Transverse colon (tissue), 4 donors: ENCODE measurements at regions of chr22 and their contacts with region 1.

Region 1: GRCh38 chr22:28014211-28015045 is 95.4 kb upstream of the PITPNB start:
- DNase-seq: no peak
- H3K4me3 ChIP-seq: no peak overlapping the region
- H3K27ac ChIP-seq: no peak overlapping the region
- H3K4me1 ChIP-seq: no peaks in the 10 kb centered on the region
- H3K27me3 ChIP-seq: no peaks in the 10 kb centered on the region
- CTCF ChIP-seq: no peak
- EP300 ChIP-seq: no peak
- POLR2A ChIP-seq: no peak

Region 2: GRCh38 chr22:27880778-27881394 is 133.5 kb before region 1 on chr22:
- in situ Hi-C with region 1: loop called (anchors 5 kb)
- intact Hi-C with region 1: loop called (anchors 2 kb)
- DNase-seq: no peak
- H3K4me3 ChIP-seq: no peak overlapping the region
- H3K27ac ChIP-seq: peak overlapping the region; percentile 68 to 85 (median 80)
- H3K4me1 ChIP-seq: peaks cover 23 to 86% (median 40%) of the 10 kb centered on the region in 4 donors
- H3K27me3 ChIP-seq: no peaks in the 10 kb centered on the region
- CTCF ChIP-seq: peak; percentile 74 to 84 (median 80)
- EP300 ChIP-seq: no peak
- POLR2A ChIP-seq: no peak